Panc1 (cell line): ENCODE measurements at regions of chr6 and their contacts with region 1.

Region 1: DNA sequence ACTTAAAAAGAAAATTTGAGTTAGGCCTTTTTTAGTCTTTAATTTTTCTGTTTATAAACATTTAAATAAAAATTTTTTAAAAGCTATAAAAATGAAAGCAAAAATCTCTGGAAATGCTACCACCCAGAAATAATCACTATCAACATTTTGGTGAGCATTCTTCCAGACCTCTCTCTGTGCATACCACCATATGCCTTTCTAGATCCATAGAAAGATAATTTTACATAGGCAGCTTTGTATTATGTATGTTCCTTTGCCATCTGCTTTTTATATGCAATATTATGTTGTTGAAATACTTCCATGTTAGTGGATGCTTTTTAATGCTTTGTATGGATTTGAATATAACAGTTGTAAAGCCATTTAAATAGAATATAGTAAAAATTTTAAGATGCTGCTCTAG is 496.7 kb upstream of the HTR1E start:
- DNase-seq: no peak
- ATAC-seq: no peak
- H3K4me3 ChIP-seq: no peak overlapping the region
- H3K27ac ChIP-seq: no peak overlapping the region
- H3K4me1 ChIP-seq: no peaks in the 10 kb centered on the region
- H3K27me3 ChIP-seq: no peaks in the 10 kb centered on the region
- CTCF ChIP-seq: no peak

Region 2: DNA sequence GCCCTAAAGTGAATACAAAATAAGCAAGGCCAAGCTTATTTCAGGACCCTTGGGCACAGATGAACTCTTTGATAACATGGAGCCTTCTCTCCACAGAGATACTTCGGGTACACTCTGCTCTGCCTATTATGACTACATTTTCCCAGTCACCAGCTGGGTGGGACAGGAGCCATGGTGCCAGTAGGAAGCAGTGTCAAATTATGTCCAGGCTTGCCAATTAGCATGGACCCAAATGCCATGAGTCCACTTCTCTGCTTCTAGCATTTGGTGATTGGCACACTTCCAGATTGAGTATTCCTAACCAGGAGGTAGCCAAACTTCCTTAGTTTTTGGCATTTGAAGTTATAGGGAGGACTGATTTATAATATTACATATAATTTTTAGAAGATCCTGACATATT is 17.0 kb before region 1 on chr6:
- CTCF ChIA-PET with region 1: no interaction called
- POLR2A ChIA-PET with region 1: no interaction called
- in situ Hi-C with region 1: no loop called
- intact Hi-C with region 1: loop called (anchors 2 kb)
- DNase-seq: no peak
- ATAC-seq: no peak
- H3K4me3 ChIP-seq: no peak overlapping the region
- H3K27ac ChIP-seq: no peak overlapping the region
- H3K4me1 ChIP-seq: no peaks in the 10 kb centered on the region
- H3K27me3 ChIP-seq: no peaks in the 10 kb centered on the region
- CTCF ChIP-seq: no peak